ENCODE measurements at regions of chr10 and their contacts with region 1.

Region 1: GRCh38 chr10:56035489-56035888 is 325.6 kb downstream of the ZWINT start:
- DNase-seq: no peak
- H3K4me3 ChIP-seq: no peak overlapping the region
- H3K27ac ChIP-seq: no peak overlapping the region
- H3K4me1 ChIP-seq: no peaks in the 10 kb centered on the region
- H3K27me3 ChIP-seq: no peaks in the 10 kb centered on the region
- CTCF ChIP-seq: no peak
- EP300 ChIP-seq: no peak
- POLR2A ChIP-seq: no peak

Region 2: DNA sequence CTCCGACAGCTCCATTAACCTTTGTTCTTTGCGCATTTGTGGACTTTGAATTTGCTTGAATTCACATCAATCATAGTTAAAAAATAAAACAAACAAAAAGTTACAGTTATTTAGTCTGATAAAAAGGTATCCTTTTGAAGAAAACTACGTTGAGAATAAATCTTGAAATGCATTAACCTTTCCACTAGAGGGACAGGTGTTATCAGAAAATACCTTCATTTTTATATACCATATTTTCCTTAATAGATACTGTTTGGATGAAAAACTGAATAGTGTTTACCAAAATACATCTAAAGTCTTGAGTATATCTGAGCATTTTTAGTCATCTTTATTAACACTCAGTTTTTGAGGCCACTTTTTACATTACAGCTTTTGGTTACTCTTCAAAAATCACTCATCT is 46.3 kb before region 1 on chr10:
- in situ Hi-C with region 1: no loop called
- intact Hi-C with region 1: no loop called
- DNase-seq: no peak
- H3K4me3 ChIP-seq: no peak overlapping the region
- H3K27ac ChIP-seq: no peak overlapping the region
- H3K4me1 ChIP-seq: no peaks in the 10 kb centered on the region
- H3K27me3 ChIP-seq: no peaks in the 10 kb centered on the region
- CTCF ChIP-seq: no peak
- EP300 ChIP-seq: no peak
- POLR2A ChIP-seq: no peak

Region 3: DNA sequence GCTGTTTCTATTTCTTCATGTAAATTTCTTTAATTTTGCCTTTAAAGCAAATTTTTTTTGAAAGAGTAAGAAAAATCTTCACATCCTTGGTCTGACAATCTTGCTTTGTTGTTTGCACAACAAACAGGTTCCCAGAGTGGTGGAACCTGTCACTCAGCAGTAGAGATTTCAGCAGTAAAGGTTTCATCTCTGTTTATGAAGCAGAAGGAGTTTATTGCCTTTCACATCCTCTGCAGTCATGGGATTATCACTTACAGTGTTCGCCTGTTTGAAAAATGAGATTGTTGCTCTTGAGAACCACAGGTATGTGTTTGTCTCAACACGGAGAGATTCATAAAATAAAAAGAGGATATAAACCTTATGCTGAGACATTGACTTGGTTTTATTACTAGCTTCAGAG is 1889.6 kb after region 1 on chr10:
- in situ Hi-C with region 1: no loop called
- intact Hi-C with region 1: loop called (anchors 5 kb)
- DNase-seq: peak; percentile 9
- H3K4me3 ChIP-seq: no peak overlapping the region
- H3K27ac ChIP-seq: no peak overlapping the region
- H3K4me1 ChIP-seq: peaks cover 0 to 6% (median 0%) of the 10 kb centered on the region in 4 donors
- H3K27me3 ChIP-seq: no peaks in the 10 kb centered on the region
- CTCF ChIP-seq: no peak
- EP300 ChIP-seq: no peak
- POLR2A ChIP-seq: no peak